Cardiac septum (tissue), 1 donor: ENCODE measurements at regions of chr17 and their contacts with region 1.

Region 1: GRCh38 chr17:55726440-55726839 is 3.8 kb upstream of the TMEM100 start:
- DNase-seq: no peak

Region 2: DNA sequence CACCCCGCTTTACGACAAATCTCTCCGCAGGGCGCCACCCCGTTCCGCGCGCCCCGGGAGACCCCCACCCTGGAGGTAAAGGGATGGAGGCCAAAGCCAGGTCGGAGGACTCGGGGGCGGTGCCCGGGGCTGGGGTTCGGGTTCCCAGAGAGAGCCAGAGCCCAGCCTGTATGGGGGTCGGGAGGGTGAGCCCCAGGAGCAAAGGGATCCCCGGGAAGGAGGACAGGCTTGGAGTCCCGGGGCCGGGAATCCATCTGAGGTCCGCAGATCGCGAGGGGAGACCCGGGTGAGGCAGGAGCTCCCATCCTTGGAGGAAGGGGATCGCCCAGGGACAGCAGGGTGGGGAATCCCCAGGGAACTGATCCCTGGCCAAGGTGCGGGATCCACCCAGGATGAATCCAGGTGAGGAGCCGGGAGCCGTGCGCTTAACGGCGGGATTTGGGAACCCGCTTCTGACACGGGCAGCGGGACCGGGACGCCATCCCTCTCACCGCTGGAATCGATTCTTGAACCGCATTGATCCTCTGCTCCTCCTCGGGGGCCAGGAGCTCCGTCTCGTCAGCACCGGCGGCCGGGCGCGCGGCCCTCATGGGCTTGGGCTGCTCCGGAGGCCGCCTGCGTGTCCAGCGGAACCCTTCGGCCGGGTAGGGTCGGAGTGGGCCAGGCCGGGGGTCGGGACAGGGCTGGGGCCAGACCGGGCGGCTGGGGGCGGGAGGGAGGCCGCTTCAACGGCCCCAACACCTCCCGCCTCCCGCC is 305.1 kb before region 1 on chr17 and contains the start of gene MMD:
- intact Hi-C with region 1: loop called (anchors 10 kb)
- DNase-seq: peak; percentile 75
- total RNA-seq, gene MMD: 12.6 TPM

Region 3: DNA sequence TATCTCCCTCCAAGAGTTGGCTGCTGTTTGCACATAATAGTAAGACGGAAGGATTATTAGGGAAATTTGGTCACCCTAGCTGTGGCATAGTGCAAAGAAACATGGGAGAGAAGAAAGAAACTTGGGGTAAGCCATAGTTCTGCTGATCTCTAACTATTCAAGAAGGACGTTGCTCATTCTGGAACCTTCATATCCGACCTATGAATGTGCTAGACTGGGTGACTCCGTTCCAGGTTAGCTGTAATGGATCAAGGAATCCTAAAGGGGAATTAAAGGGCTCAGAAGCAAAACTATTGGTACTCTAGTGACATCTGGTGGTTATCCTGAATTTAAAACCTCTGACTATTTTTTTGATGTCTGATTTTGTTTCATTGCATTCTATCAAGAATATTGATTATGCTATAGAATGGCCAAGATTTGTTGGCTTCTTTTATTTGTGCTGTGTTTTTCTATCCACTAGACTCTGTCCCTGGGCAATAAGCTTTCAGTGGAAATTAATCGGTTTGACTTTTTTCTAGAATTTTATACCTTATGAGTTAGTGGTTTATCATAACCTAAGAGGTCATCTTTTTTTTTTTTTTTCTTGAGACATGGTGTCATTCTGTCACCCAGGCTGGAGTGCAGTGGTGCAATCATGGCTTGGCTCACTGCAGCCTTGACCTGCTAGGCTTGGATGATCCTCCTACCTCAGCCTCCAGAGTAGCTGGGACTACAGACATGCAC is 43.9 kb after region 1 on chr17:
- intact Hi-C with region 1: loop called (anchors 5 kb)
- DNase-seq: no peak

Region 4: DNA sequence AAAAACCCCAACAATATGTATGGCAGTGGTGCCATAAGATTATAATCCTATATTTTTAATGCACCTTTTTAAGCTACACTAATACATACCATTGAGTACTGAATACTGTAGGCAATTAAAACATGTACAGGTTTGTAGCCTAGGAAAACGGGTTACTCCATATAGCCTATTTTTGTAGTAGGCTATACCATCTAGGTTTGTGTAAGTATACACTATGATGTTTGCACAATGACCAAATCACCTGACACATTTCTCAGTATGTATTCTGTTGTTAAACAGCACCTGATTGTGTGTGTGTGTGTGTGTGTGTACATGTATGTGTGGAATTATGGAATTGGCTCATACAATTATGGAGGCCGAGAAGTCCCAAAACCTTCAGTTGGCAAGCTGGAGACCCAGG is 55.2 kb after region 1 on chr17:
- intact Hi-C with region 1: no loop called
- DNase-seq: no peak